CD14-positive monocyte (primary cell): ENCODE measurements at regions of chr11 and their contacts with region 1.

Region 1: GRCh38 chr11:66842896-66843775 is at the start of gene RCE1:
- DNase-seq: peak; percentile 84 to 93 (median 85)
- H3K4me3 ChIP-seq: peak within 1 kb of the TSS; percentile 76 to 91 (median 83)
- H3K4me3 Mint-ChIP-seq: peak within 1 kb of the TSS; percentile 90 to 94
- H3K27ac ChIP-seq: peak within 1 kb of the TSS; percentile 88 to 98
- H3K27ac Mint-ChIP-seq: peak within 1 kb of the TSS; percentile 92 to 97 (median 93)
- H3K4me1 ChIP-seq: peaks cover 23 to 30% of the 10 kb centered on the region in 2 donors
- H3K4me1 Mint-ChIP-seq: peaks cover 37% of the 10 kb centered on the region
- H3K27me3 ChIP-seq: no peaks in the 10 kb centered on the region
- H3K27me3 Mint-ChIP-seq: no peaks in the 10 kb centered on the region
- CTCF ChIP-seq: no peak
- polyA plus RNA-seq, gene RCE1: 20.3 to 24.7 (median 22.8) TPM

Region 2: DNA sequence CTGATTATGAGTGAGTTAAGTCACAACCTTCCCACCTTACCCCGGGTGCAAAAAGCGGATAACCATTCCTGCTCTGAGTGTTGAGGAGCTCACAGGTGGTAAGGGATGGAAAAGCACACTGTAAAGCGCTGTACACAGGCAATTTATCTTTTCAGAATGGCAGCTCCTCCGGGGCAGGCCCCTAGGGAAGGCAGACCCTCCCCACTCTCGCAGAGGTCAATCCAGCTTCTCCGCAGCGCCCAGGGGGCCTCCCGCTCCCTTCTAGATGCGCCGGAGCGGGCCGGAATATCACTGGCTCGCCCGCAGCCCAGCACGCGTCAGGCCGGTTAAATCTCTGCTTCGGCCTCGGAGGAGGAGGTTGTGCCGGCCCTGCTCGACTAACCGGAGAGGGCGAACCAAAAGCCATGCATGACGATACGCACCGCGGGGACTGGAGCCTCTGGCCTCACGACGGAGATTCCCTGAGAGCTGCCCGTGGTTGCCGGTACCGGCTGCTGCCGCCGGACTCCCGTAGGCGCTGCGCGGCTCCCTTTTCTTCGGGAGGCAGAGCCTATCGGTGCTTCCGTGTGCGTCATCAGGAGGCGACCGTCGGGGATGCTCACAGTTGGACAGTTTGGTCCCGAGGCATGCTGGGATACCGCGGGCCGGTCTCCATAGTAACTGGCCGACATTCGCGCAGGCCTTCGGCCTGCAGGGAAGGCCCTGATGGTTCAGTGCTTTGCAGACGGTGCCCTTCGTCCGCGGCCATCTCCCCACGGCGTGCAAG is 498.4 kb before region 1 on chr11 and contains the start of gene BRMS1:
- intact Hi-C with region 1: loop called in 1 of 2 experiments (anchors 2 kb)
- DNase-seq: peak; percentile 96 to 98 (median 97)
- H3K4me3 ChIP-seq: peak within 1 kb of the TSS; percentile 57 to 93 (median 64)
- H3K4me3 Mint-ChIP-seq: peak within 1 kb of the TSS; percentile 90 to 96
- H3K27ac ChIP-seq: peak within 1 kb of the TSS; percentile 69 to 94
- H3K27ac Mint-ChIP-seq: peak within 1 kb of the TSS; percentile 92 to 97 (median 95)
- H3K4me1 ChIP-seq: peaks cover 34 to 41% of the 10 kb centered on the region in 2 donors
- H3K4me1 Mint-ChIP-seq: peaks cover 31% of the 10 kb centered on the region
- H3K27me3 ChIP-seq: peaks cover 0 to 9% of the 10 kb centered on the region in 2 donors
- H3K27me3 Mint-ChIP-seq: peaks cover 4 to 21% (median 11%) of the 10 kb centered on the region in 3 donors
- CTCF ChIP-seq: no peak
- polyA plus RNA-seq, gene BRMS1: 49.0 to 65.2 (median 62.0) TPM

Region 3: GRCh38 chr11:66418168-66418985 is 424.8 kb before region 1 on chr11:
- intact Hi-C with region 1: loop called in 1 of 2 experiments (anchors 10 kb)
- DNase-seq: peak; percentile 54 to 75 (median 60)
- H3K4me3 ChIP-seq: no peak overlapping the region
- H3K4me3 Mint-ChIP-seq: peak overlapping the region in 1 of 2 donors; percentile 88
- H3K27ac ChIP-seq: no peak overlapping the region
- H3K27ac Mint-ChIP-seq: peak overlapping the region in 2 of 7 donors; percentile 71 to 83
- H3K4me1 ChIP-seq: no peaks in the 10 kb centered on the region
- H3K4me1 Mint-ChIP-seq: peaks cover 8% of the 10 kb centered on the region
- H3K27me3 ChIP-seq: peaks cover 14 to 40% of the 10 kb centered on the region in 2 donors
- H3K27me3 Mint-ChIP-seq: peaks cover 38 to 55% (median 39%) of the 10 kb centered on the region in 3 donors
- CTCF ChIP-seq: peak; percentile 32

Region 4: DNA sequence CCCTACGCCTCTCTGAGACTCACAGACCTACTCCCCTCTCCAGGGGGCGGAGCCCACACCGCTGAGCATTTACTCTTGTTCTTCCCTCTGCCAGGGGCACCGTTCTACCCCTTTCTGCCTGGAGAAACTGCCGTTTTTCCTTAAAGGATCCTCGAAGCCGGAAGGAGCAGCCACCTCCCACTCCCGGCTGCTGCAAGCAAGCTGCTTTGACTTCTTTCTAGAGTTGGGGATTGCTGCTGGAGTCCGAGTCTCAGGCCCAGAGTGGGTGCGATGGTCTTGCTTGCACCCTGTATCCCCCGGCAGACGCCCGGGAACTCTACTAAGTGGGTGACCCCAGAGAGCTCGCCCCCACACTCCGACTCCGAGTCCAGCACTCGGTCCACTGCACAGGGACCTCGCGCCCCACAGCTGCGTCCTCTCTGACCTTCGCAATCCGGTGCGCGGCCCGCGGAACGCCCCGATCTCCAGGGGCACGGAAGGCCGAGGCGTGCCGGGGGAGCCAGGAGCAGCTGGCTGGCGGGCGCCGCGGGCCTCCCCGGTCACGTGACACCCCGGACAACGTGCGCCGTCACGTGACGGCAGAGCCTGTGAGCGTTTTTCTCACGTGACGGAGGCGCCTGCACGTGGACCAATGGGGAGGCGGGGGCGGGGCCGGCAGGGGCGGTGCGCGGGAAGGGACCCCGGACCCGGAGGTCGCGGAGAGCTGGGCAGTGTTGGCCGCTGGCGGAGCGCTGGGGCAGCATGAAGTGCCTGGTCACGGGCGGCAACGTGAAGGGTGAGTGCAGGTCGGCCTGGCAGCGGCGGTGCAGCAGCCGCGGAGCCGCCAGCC is 548.4 kb after region 1 on chr11 and contains the start of gene RAD9A:
- intact Hi-C with region 1: loop called in 1 of 2 experiments (anchors 10 kb)
- DNase-seq: peak; percentile 92 to 95 (median 93)
- H3K4me3 ChIP-seq: peak within 1 kb of the TSS; percentile 82 to 92 (median 85)
- H3K4me3 Mint-ChIP-seq: peak within 1 kb of the TSS; percentile 91 to 98
- H3K27ac ChIP-seq: peak within 1 kb of the TSS; percentile 75 to 89
- H3K27ac Mint-ChIP-seq: peak within 1 kb of the TSS; percentile 85 to 92 (median 88)
- H3K4me1 ChIP-seq: peaks cover 25 to 37% of the 10 kb centered on the region in 2 donors
- H3K4me1 Mint-ChIP-seq: peaks cover 41% of the 10 kb centered on the region
- H3K27me3 ChIP-seq: no peaks in the 10 kb centered on the region
- H3K27me3 Mint-ChIP-seq: peaks cover 0 to 8% (median 1%) of the 10 kb centered on the region in 3 donors
- CTCF ChIP-seq: no peak
- polyA plus RNA-seq, gene RAD9A: 3.7 to 31.7 (median 3.8) TPM